Activated naive CD4-positive, alpha-beta T cell treated with anti-CD3 and anti-CD28 coated beads for 36 hours (primary cell): ENCODE measurements at regions of chr1 and their contacts with region 1.

Region 1: DNA sequence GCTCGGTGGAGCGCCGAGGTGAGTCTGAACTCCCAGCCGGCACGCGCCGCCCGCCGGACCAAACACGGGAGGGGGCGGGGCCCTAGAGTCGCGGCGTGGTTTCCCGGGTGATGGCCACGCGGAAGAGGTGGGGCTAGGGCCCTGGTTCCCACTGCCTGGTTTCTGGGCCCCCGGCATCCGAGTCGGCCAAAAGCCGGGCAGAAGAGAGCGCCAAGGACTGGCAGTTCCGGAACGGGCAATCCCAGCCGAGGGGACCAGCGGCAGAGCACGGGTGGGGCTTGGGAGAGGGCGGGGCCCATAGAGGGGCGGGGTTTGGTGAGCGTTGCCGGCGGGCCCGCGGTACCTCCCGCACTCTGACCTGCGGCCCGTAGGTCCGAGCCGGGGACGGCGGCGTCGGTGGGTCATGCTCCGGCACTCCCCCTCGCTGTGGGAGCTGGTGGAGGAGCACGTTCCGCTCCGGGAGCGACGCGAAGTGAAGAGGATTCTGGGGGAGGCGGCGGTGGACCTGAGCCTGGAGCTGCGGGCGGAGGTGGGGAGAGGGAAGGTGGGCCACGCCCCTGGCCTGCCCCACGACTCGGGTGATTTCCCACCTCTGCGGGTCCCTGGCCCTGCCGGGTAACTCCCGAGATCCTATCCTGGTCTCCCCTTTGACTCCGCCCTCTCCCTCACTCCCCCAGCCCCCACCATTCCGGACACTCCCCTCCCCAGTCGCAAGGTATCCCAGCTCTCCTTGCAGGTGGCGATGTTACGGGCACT is at the start of gene CCDC24:
- DNase-seq: peak; percentile 74
- H3K4me3 Mint-ChIP-seq: peak within 1 kb of the TSS; percentile 89
- H3K27ac Mint-ChIP-seq: peak within 1 kb of the TSS; percentile 53
- H3K4me1 Mint-ChIP-seq: peaks cover 5% of the 10 kb centered on the region
- H3K27me3 Mint-ChIP-seq: no peaks in the 10 kb centered on the region
- total RNA-seq, gene CCDC24: 0.91 to 1.6 TPM

Region 2: DNA sequence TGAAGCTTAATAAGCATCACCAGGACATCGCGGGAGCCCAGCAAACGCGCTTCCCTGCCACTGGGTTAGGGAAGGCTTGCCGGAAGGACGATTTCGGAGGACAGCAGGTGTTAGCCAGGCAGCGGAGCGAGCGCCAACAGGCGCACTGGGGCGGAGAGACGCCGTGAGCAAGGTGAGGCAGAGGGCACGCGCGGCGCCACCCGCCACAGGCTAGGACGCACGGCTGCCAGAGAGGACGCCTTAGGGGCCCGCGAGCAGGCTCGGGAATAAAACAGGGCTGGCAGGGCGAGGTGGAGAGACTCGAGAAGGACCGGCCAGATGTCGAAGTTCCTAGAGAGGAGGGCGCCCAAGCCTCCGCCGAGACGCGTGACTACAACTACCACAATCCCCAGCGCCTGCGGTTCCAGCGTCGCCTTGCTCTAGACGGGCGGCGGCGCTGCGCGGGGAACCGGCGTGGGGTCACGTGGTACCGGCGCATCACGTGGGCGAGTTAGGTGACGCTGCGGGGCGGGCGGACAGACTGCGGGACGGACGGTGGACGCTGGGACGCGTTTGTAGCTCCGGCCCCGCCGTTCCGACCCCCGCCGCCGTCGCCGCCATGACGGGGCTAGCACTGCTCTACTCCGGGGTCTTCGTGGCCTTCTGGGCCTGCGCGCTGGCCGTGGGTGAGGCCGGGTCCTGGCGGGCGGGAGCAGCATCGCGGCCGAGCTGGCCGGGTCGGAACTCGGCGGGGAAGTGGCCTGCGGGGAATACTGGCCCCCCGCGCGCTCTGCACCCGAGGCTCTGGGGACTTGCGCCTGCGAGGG is 17.0 kb before region 1 on chr1 and contains the start of gene ATP6V0B:
- CTCF ChIA-PET with region 1: interaction called, 3 read pairs
- intact Hi-C with region 1: loop called (anchors 1 kb)
- DNase-seq: peak; percentile 97
- H3K4me3 Mint-ChIP-seq: peak within 1 kb of the TSS; percentile 85
- H3K27ac Mint-ChIP-seq: peak within 1 kb of the TSS; percentile 75
- H3K4me1 Mint-ChIP-seq: peaks cover 50% of the 10 kb centered on the region
- H3K27me3 Mint-ChIP-seq: no peaks in the 10 kb centered on the region
- total RNA-seq, gene ATP6V0B: 44.2 to 52.6 TPM

Region 3: DNA sequence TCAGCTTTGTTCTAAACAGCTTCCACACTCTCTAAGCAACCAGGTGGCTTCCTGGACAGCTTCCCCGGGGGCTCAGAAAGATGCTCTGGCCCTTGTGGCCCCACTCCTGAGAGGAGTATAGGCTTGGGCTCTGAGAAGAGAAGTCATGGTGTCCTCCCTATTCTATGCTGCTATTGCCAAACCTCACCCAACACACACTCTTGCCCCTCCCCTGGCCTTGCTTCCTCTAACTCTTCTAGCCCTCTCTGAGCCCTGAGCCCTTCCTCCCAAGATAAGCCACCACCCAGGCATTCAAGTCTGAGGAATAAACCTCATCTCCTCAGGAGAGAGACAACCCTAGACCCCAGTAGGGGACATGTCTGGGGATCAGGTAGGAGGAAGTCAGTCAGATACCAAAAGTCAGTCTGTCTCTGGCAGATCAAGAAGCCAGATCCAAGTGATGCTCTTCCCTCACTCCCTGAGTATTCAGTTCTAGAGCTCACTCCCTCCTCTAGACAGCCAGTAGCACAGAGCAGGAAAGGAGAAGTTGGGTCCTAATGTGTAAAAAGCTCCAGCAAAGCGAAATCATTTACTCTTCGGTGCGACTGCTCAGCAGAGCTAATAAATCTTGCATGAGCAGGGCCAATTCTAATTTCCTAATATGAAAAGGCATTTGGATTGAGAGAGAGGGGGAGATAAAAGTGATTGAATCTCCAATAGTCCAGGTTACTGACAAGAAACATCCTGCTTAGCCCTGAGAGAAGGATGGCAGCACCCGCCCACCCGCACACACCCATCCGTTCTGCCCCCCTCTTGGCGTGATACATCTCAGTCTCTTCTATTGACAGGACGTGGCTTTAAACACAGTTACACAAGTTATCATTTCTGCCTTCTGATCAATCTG is 272.2 kb after region 1 on chr1:
- CTCF ChIA-PET with region 1: no interaction called
- intact Hi-C with region 1: loop called (anchors 5 kb)
- DNase-seq: no peak
- H3K4me3 Mint-ChIP-seq: no peak overlapping the region
- H3K27ac Mint-ChIP-seq: no peak overlapping the region
- H3K4me1 Mint-ChIP-seq: peaks cover 27% of the 10 kb centered on the region
- H3K27me3 Mint-ChIP-seq: no peaks in the 10 kb centered on the region